ENCODE measurements at regions of chr1 and their contacts with region 1.

Region 1: DNA sequence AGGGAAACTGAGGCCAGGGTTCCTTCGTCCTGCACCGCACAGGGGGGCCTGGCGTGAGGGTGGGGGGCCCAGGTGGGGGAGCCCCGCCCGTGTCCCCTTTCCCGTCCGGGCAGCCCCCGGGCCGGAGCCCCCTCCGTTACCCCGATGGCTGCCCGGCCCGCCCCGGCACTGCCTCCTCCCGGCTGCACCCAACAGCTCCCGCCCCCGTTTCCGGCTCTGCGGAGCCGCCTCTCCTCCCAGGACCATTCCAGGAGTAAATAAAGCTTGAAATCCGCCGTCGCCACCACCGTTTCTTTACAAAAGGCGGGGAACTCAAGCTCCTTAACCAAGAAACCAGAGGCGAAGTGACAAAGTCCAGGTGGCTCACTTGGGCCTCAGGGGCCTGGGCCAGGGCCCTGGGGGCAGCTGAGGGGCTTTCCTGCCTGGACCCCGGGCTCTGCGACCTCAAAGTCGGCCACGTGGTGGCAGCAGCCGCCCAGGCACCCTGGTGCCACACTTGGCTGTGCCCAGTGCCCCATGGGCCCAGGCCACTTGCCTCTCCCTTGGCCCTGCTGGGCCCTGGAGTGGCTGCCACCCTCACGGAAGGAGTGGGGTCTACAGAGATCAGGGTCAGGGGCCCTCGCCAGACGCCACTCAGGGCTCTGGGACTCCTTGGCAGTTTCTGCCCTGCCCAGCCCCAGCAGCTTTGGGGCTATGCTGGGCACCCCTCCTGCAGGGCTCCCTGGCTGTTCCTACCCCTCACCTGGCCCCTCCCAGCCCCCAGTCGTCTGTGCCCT is 514 bp upstream of the FAAP20 start:
- DNase-seq: peak; percentile 81
- H3K27ac ChIP-seq: peak overlapping the region; percentile 97
- CTCF ChIP-seq: peak; percentile 92

Region 2: GRCh38 chr1:2019172-2019543 is 175.9 kb before region 1 on chr1 and contains the start of gene GABRD:
- CTCF ChIA-PET with region 1: no interaction called
- POLR2A ChIA-PET with region 1: no interaction called
- DNase-seq: peak; percentile 63
- H3K27ac ChIP-seq: no peak within 1 kb of the TSS
- CTCF ChIP-seq: no peak

Region 3: DNA sequence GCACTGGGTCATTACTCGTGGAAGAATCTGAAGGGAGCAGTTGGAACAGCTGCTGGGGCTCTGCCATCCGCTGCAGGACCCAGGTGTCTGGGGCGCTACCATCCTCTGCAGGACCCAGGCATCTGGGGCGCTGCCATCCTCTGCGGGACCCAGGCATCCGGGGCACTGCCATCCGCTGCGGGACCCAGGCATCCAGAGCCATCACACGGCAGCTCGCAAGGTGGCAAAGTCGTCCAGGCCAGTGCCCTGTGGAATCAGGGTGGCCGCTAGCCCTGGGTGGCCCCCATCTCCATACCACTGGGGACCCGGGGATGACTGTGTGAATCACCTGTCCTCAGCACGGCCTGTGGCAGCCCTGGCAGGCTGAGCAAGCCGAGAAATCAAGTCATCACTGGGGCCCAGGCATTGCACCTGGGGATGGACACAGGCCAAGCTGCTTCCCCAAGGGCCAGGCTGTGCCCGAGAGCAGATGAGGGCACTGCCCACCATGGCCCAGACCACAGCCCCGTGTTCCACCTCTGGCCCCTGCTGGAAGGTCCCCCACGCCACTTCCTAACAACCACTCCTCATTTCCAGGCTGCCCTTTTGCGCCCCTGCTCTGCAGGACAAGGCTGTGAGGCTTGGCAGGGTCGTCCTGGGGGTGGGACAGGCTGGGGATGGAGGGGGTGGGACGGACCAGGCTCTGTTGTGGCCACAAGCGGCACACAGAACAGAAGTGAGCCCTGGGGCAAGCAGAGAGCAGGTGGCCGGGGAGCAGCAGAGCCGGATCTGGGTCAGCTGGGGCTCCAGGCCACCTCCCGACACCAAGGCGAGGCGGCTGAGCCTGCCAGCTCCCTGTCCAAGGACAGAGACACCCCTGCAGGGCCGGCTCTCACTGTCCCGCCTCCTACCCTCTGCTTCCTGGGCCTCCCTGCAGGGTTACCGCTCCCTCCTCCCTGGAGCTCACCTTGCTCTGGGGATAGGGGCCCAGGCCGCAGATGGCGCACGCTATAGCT is 163.2 kb before region 1 on chr1:
- CTCF ChIA-PET with region 1: no interaction called
- POLR2A ChIA-PET with region 1: no interaction called
- DNase-seq: no peak
- H3K27ac ChIP-seq: no peak overlapping the region
- CTCF ChIP-seq: no peak

Region 4: DNA sequence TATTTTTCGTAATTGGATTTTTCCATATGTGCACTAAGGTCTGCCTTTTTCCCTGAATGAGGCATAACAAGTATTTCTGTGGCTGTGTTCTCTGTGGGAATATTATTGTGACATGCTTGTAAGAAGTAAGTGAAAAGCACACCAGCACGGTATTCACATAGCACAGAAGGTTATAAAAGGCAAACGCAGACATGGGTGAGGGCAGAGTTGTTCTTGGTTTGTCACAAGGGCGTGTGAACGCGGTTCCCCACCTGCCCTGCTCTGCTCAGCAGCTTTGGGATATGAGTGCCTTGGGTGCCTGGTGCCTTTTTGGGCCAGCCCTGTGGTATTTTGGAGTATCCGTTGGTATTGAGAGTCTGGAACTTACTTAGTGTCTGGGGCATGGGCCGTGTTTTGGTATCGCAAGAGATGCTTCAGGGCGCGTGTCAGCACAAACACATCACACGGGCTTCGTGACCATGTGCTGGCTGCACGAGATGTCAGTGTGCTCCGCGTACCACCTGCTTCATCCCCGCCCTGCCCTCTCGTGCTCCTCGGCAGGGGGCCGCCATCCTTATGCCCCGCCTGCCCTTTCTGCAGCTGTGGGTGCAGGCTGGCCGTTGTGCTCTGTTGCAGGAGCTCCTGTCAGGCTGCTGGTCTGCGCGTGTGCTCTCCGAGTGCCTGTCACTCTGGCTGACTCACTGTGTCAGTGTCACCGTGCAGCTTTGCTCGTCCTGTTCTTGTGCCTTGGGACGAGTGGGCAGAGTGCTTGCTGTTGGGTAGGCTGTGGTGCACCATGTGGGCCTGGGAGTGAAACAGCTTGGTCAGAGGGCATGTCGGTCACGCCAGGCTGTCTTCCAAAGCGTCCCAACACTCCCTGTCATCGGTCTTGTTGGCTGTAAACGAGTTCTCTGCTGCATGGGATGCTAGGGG is 48.0 kb after region 1 on chr1:
- CTCF ChIA-PET with region 1: no interaction called
- POLR2A ChIA-PET with region 1: no interaction called
- DNase-seq: no peak
- H3K27ac ChIP-seq: peak overlapping the region; percentile 99
- CTCF ChIP-seq: no peak

Region 5: GRCh38 chr1:2314803-2315673 is 120.0 kb after region 1 on chr1:
- CTCF ChIA-PET with region 1: interaction called, 12 read pairs
- POLR2A ChIA-PET with region 1: no interaction called
- DNase-seq: peak; percentile 72
- H3K27ac ChIP-seq: peak overlapping the region; percentile 88
- CTCF ChIP-seq: peak; percentile 90

Region 6: GRCh38 chr1:2381741-2382620 is 186.9 kb after region 1 on chr1:
- CTCF ChIA-PET with region 1: interaction called, 86 read pairs
- POLR2A ChIA-PET with region 1: interaction called, 10 read pairs
- DNase-seq: peak; percentile 82
- H3K27ac ChIP-seq: peak overlapping the region; percentile 42
- CTCF ChIP-seq: peak; percentile 90

Measured in RWPE1 (cell line).